ENCODE measurements at regions of chr5 and their contacts with region 1.

Region 1: GRCh38 chr5:33379757-33380156 is 61.0 kb upstream of the TARS1 start:
- DNase-seq: peak; percentile 89

Region 2: DNA sequence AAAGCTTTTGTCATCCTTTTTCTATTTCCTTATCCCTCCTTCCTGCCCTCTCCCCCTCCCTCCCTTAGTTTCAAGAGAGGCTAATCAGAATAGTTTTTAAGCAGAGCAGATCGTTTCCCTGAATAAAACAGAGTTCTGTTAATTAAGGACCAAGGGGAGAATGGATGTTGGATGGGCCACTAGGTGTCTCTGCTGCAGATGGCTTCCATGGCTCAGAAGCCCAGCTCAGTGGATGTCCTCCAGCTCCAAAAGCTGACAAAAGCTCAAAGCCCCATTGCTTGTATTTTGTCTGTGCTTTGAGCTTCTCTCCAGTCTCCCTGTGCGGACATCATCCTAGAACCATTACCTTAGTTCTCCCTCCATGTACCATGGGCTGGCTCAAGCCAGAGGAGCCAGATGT is 689.6 kb before region 1 on chr5:
- in situ Hi-C with region 1: loop called (anchors 25 kb)
- DNase-seq: no peak

Region 3: DNA sequence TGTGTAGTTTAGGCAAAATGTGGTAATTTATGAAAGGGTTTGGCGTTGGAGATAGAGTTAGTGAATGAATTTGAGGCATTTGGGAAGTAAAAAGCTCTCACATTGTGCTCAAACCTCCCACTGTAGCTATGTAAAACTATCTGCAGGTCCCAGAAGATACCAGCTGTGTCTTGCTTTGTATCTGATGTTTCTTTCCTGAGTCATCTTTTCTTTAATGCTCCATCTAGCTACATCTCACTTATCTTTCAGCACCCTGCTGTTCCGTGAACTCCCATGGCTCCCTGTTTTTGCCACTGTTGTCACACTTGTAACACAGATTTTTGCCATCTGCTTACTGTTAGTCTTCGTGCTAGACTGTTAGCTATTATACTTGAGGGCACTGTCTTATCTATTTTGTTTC is 415.5 kb before region 1 on chr5:
- in situ Hi-C with region 1: loop called (anchors 25 kb)
- DNase-seq: no peak